ENCODE measurements at regions of chr19 and their contacts with region 1.

Region 1: DNA sequence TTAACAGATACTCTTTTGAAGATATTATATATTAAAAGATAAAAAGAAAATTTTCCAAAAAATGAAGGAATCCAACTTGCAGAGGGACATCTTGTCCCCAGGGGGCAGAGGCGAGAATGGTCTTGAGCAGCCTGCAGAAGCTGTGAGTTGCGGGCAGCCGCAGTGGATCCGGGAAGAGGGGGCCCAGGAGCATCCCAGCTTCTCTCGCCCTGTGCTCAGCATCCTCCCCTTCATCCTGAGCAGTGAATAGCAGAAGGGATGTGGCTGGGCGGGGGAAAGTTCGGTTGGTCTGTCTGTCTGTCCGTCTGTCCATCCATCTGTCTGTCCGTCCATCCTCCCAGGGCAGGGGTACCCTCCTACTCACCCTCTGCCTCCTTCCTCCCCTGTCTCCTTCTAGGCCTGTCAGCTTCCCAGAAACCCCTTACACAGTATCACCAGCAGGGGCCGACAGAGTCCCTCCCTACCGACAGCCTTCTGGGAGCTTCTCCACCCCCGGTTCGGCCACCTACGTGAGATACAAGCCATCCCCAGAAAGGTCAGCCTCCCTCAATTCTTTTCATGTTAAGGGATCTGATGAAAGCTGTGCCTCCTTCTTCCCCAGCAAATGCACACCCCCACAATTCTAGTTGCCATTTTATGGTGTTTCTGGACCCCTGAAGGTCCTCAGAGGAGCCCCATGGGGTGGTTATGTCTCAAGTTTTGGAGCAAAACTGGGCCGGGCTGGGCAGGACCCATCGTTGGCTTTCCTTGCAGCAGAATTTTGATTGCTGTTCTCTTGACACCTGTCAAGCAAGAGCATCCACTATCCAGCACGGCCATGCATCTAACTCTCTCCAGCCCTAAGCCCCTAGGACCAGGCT is 81.6 kb downstream of the DPF1 start:
- DNase-seq: no peak
- H3K4me3 ChIP-seq: no peak overlapping the region
- CTCF ChIP-seq: peak; percentile 97

Region 2: GRCh38 chr19:38057959-38058710 is 84.3 kb before region 1 on chr19:
- in situ Hi-C with region 1: no loop called
- DNase-seq: no peak
- H3K4me3 ChIP-seq: no peak overlapping the region
- CTCF ChIP-seq: no peak

Region 3: GRCh38 chr19:38070573-38070972 is 71.8 kb before region 1 on chr19:
- in situ Hi-C with region 1: no loop called
- DNase-seq: peak; percentile 13
- H3K4me3 ChIP-seq: no peak overlapping the region
- CTCF ChIP-seq: no peak

Region 4: DNA sequence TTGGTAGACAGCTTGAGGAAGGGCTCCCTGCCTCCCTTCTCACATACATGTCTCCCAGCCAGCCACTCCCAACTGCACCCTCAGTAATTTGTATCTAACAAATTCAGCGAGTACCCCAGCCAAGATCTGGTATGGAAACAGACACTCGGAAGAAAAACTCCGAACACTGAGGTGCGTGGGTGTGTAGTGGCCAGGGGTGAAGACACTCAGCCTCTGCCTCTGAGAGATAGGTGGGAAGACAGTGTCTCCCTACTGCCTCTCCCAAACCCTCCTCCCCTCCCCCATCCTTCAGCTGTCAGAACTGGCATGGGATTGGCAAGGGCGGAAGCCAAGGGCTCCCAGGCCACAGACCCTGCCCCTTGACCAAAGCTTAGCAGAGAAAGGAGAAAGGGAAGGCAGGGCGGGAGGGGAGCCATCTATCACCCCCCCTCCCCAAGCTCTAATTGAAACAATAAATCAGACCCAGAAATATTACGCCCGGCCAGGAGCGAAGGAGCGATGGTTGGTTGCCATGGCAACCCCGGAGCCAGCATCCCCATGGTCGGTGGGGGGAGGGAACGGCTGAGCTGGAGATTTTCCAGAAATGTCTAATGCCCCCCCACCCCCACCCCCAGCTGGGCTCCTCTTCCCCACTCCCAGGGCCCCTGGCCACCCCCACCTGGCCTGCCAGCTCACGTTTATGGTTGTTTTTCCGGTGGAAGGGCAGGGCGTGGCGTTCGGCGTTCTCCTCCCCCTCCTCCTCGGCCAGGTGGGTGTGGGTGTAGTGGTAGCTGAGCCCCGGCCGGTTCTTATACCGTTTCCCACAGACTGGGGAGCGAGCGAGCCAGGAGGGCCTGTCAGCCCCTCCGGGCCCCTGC is 74.6 kb after region 1 on chr19:
- in situ Hi-C with region 1: loop called (anchors 5 kb)
- DNase-seq: no peak
- H3K4me3 ChIP-seq: no peak overlapping the region
- CTCF ChIP-seq: no peak